ENCODE measurements at regions of chr7 and their contacts with region 1.

Region 1: DNA sequence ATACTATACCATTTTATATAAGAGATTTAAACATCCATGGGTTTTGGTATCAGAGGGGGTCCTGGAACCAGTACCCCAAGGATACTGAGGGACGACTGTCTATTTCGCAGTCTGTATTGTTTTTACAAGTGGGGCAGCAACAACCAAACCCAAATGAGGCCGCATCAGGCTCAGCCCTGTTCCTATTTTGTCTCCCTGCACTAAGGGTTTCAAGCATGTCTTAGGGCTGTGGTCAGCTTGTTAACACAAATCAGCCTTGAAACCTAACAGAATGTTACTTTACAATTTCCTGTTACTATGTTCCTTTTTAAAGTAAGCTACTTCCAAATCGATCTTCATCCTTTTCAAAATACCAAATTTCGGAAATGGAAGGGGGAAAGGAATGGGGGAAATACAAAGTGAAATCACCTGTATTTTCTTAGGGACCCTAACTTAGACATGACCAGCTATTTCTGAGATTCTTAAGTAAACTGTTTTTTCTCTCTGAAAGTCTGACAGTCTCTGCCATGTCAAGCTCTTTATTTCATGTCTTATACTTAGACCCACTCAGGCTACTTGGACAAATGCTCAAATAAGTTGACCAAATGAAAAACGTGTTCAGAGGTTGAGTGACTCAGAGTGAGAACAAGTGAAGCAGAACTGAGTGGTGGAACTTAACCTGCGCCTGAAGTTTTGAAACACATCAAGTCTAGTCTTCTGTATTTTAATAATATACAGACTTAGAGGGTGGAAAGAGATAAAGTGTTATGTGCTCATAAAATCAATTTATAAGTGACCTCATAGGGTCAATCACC is 75.8 kb downstream of the C1GALT1 start:
- DNase-seq: peak in 2 of 9 experiments; percentile 42 to 63
- ATAC-seq: peak; percentile 54
- H3K4me3 ChIP-seq: peak overlapping the region in 1 of 2 experiments; percentile 58
- H3K4me3 Mint-ChIP-seq: peak overlapping the region; percentile 70
- H3K27ac ChIP-seq: peak overlapping the region; percentile 64 to 95
- H3K27ac Mint-ChIP-seq: peak overlapping the region; percentile 88
- H3K4me1 ChIP-seq: peaks cover 27% of the 10 kb centered on the region
- H3K4me1 Mint-ChIP-seq: peaks cover 41% of the 10 kb centered on the region
- H3K27me3 ChIP-seq: no peaks in the 10 kb centered on the region
- H3K27me3 Mint-ChIP-seq: no peaks in the 10 kb centered on the region
- CTCF ChIP-seq: no peak

Region 2: GRCh38 chr7:6530626-6531491 is 727.2 kb before region 1 on chr7:
- CTCF ChIA-PET with region 1: no interaction called
- POLR2A ChIA-PET with region 1: no interaction called
- intact Hi-C with region 1: no loop called
- DNase-seq: peak; percentile 54 to 87 (median 75)
- ATAC-seq: peak; percentile 90
- H3K4me3 ChIP-seq: peak overlapping the region; percentile 59 to 83
- H3K4me3 Mint-ChIP-seq: peak overlapping the region; percentile 83
- H3K27ac ChIP-seq: no peak overlapping the region
- H3K27ac Mint-ChIP-seq: no peak overlapping the region
- H3K4me1 ChIP-seq: peaks cover 13% of the 10 kb centered on the region
- H3K4me1 Mint-ChIP-seq: peaks cover 20% of the 10 kb centered on the region
- H3K27me3 ChIP-seq: peaks cover 1 to 12% of the 10 kb centered on the region in 2 experiments
- H3K27me3 Mint-ChIP-seq: peaks cover 19% of the 10 kb centered on the region
- CTCF ChIP-seq: no peak

Region 3: GRCh38 chr7:6607651-6608051 is 650.4 kb before region 1 on chr7:
- CTCF ChIA-PET with region 1: no interaction called
- POLR2A ChIA-PET with region 1: no interaction called
- intact Hi-C with region 1: no loop called
- DNase-seq: no peak
- ATAC-seq: no peak
- H3K4me3 ChIP-seq: no peak overlapping the region
- H3K4me3 Mint-ChIP-seq: no peak overlapping the region
- H3K27ac ChIP-seq: no peak overlapping the region
- H3K27ac Mint-ChIP-seq: no peak overlapping the region
- H3K4me1 ChIP-seq: no peaks in the 10 kb centered on the region
- H3K4me1 Mint-ChIP-seq: peaks cover 3% of the 10 kb centered on the region
- H3K27me3 ChIP-seq: no peaks in the 10 kb centered on the region
- H3K27me3 Mint-ChIP-seq: no peaks in the 10 kb centered on the region
- CTCF ChIP-seq: no peak

Region 4: DNA sequence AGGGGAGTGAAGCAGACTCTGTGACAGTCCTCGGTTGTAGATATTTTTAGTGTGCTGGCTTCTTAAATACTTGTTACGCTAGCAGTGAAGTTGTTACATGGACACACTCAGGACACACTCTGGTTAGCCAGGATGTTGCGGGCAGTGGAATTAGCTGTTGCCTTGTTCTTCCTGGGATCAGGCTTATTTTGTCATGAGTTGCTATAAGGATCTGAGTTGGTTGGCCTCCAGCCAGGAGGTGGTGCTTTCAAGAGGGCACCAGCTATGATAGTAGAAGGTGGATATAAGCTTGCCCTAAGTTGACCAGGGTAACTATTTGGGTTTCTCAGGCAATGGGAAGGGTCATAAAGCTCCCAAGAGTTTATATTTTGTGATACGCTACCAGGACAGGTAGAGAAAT is 225.9 kb before region 1 on chr7:
- CTCF ChIA-PET with region 1: no interaction called
- POLR2A ChIA-PET with region 1: no interaction called
- intact Hi-C with region 1: no loop called
- DNase-seq: no peak
- ATAC-seq: no peak
- H3K4me3 ChIP-seq: no peak overlapping the region
- H3K4me3 Mint-ChIP-seq: no peak overlapping the region
- H3K27ac ChIP-seq: no peak overlapping the region
- H3K27ac Mint-ChIP-seq: no peak overlapping the region
- H3K4me1 ChIP-seq: no peaks in the 10 kb centered on the region
- H3K4me1 Mint-ChIP-seq: no peaks in the 10 kb centered on the region
- H3K27me3 ChIP-seq: peaks cover 0 to under 1% of the 10 kb centered on the region in 2 experiments
- H3K27me3 Mint-ChIP-seq: peaks cover 32% of the 10 kb centered on the region
- CTCF ChIP-seq: no peak

Region 5: DNA sequence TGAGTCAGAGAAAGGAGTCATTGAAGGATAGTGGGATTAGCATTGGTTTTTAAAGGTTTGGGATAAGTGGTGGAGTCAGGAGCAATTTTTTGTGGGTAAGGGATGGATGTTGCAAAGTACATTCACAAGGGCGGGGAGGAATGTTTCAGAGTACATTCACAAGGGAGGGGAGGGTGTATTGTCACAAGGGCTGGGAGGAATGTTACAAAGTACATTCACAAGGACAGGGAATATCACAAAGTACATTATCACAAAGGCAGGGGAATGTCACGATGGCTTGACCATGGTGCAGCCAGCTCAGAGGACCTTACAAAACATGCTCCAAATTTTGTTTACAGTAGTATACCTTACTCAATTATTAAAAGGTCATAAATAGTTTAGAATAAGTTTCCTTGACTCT is 45.5 kb before region 1 on chr7:
- CTCF ChIA-PET with region 1: no interaction called
- POLR2A ChIA-PET with region 1: no interaction called
- intact Hi-C with region 1: no loop called
- DNase-seq: no peak
- ATAC-seq: no peak
- H3K4me3 ChIP-seq: no peak overlapping the region
- H3K4me3 Mint-ChIP-seq: no peak overlapping the region
- H3K27ac ChIP-seq: no peak overlapping the region
- H3K27ac Mint-ChIP-seq: no peak overlapping the region
- H3K4me1 ChIP-seq: no peaks in the 10 kb centered on the region
- H3K4me1 Mint-ChIP-seq: peaks cover 58% of the 10 kb centered on the region
- H3K27me3 ChIP-seq: no peaks in the 10 kb centered on the region
- H3K27me3 Mint-ChIP-seq: no peaks in the 10 kb centered on the region
- CTCF ChIP-seq: no peak

Region 6: DNA sequence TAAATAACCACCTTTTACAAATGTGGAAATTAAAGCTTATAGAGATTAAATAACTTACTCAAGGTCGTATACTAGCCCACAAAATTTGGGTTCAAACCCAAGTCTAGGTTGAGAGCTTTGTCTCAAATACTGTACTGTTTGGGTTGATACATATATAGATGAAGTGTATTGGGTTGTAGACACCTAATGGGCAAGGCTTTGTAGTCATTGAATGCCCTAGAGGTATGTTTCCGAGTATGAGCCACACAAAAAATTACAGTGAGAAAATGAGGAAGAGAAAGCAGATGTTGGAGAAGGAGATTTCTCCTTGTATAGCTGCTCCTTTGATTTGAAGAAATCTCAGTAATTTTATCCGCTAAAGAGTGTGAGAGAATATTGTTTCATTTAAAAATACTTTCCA is 15.2 kb before region 1 on chr7:
- CTCF ChIA-PET with region 1: no interaction called
- POLR2A ChIA-PET with region 1: interaction called, 3 read pairs
- intact Hi-C with region 1: loop called in 1 of 2 experiments (anchors 2 kb)
- DNase-seq: no peak
- ATAC-seq: no peak
- H3K4me3 ChIP-seq: no peak overlapping the region
- H3K4me3 Mint-ChIP-seq: no peak overlapping the region
- H3K27ac ChIP-seq: no peak overlapping the region
- H3K27ac Mint-ChIP-seq: no peak overlapping the region
- H3K4me1 ChIP-seq: peaks cover 3% of the 10 kb centered on the region
- H3K4me1 Mint-ChIP-seq: peaks cover 49% of the 10 kb centered on the region
- H3K27me3 ChIP-seq: no peaks in the 10 kb centered on the region
- H3K27me3 Mint-ChIP-seq: no peaks in the 10 kb centered on the region
- CTCF ChIP-seq: no peak